WTC11 (cell line): ENCODE measurements at regions of chr1 and their contacts with region 1.

Region 1: GRCh38 chr1:116377541-116378529 is 4.8 kb downstream of the ATP1A1 start:
- DNase-seq: no peak
- ATAC-seq: no peak
- H3K4me3 Mint-ChIP-seq: no peak overlapping the region
- H3K27ac Mint-ChIP-seq: peak overlapping the region; percentile 1; the same call in 1 of the 2 replicates
- H3K4me1 Mint-ChIP-seq: peaks cover 82% of the 10 kb centered on the region
- H3K27me3 Mint-ChIP-seq: no peaks in the 10 kb centered on the region
- CTCF ChIP-seq: no peak

Region 2: GRCh38 chr1:116418091-116418830 is 40.4 kb after region 1 on chr1:
- CTCF ChIA-PET with region 1: interaction called, 10 read pairs
- POLR2A ChIA-PET with region 1: no interaction called
- DNase-seq: peak; percentile 86
- ATAC-seq: peak; percentile 80
- H3K4me3 Mint-ChIP-seq: peak overlapping the region; percentile 87
- H3K27ac Mint-ChIP-seq: no peak overlapping the region
- H3K4me1 Mint-ChIP-seq: peaks cover 29% of the 10 kb centered on the region
- H3K27me3 Mint-ChIP-seq: peaks cover 3% of the 10 kb centered on the region; the same call in 1 of the 2 replicates
- CTCF ChIP-seq: no peak

Region 3: DNA sequence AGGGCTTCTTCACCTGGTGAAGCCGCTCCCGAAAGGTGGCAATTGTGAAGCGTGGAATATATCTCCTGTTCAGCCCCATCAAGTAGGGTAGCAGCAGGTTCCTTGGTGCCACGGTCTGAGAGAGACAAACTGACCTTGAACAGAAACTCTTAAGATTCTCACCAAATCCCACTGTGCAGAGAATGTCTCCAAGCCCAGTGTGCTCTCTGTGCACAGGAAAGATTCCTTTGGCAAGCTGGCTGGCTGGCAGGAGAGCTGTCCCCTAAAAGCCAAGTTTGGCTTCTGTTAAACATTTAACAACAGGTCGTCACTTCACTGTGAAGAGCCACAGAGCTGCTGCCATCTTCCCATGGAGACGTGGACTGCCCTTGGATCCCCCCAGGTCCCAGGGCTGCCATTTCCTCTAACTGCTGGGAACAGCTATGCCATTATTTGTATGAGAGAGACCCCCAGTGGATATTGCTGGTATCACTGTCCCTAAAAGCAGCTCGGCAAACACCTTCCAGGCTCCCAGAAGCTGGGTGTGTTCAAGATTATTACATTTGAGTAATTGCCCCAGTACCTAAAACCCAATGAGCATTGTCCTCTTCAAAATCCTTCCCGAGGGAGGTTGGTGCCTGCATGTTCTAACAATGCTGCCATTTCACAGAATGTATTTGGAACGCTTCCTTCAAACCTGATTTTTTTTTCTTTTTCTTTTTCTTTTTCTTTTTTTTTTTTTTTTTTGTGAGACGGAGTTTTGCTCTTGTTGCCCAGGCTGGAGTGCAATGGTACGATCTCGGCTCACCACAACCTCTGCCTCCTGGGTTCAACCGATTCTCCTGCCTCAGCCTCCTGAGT is 121.2 kb after region 1 on chr1:
- CTCF ChIA-PET with region 1: interaction called, 13 read pairs
- POLR2A ChIA-PET with region 1: no interaction called
- DNase-seq: peak; percentile 68
- ATAC-seq: peak; percentile 88
- H3K4me3 Mint-ChIP-seq: no peak overlapping the region
- H3K27ac Mint-ChIP-seq: no peak overlapping the region
- H3K4me1 Mint-ChIP-seq: peaks cover 16% of the 10 kb centered on the region
- H3K27me3 Mint-ChIP-seq: no peaks in the 10 kb centered on the region
- CTCF ChIP-seq: peak; percentile 67